Right cardiac atrium (tissue), 5 donors: ENCODE measurements at regions of chr19 and their contacts with region 1.

Region 1: GRCh38 chr19:2983351-2984195 is 6.2 kb downstream of the TLE6 start:
- DNase-seq: peak; percentile 84 to 91 (median 90)
- ATAC-seq: peak; percentile 67 to 74
- H3K4me3 ChIP-seq: peak overlapping the region; percentile 8
- H3K27ac ChIP-seq: peak overlapping the region; percentile 76
- H3K4me1 ChIP-seq: peaks cover 9% of the 10 kb centered on the region
- H3K27me3 ChIP-seq: no peaks in the 10 kb centered on the region

Region 2: GRCh38 chr19:2944775-2945574 is 38.6 kb before region 1 on chr19 and contains the start of gene ZNF77:
- intact Hi-C with region 1: no loop called
- DNase-seq: peak; percentile 99 to 100 (median 99)
- ATAC-seq: peak; percentile 96 to 99
- H3K4me3 ChIP-seq: peak within 1 kb of the TSS; percentile 77
- H3K27ac ChIP-seq: peak within 1 kb of the TSS; percentile 71
- H3K4me1 ChIP-seq: peaks cover 6% of the 10 kb centered on the region
- H3K27me3 ChIP-seq: no peaks in the 10 kb centered on the region
- total RNA-seq, gene ZNF77: 2.1 to 4.0 (median 2.9) TPM

Region 3: DNA sequence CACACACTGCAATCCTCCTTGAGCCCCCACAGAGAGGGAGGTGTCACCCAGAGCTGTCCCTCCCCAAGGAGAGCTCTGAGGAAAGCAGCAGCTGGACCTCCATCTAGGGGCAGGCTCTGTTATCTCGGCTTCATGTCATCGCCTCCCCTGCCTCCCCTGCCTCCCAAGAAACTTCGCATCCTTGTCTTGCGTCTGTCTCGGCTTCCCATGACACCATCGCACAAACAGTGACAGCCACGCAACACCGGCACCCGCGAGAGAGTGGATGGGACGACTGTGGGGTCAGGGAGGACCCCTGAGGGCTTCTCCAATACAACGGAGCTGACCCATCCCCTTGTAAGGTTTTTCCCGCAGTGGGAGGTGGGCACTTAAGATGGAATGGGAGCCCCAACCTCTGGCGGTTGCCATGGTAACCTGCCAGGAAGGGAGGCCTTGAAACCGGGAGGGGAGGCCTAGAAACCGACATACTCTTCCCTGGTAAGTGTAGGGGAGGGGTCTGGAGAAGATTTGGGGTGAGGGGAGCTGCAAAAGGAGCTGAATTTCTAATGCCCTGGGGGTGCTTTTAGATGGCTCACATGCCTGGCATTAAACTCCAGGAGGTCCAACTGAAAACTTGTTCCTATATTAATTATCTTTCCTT is 29.2 kb after region 1 on chr19:
- intact Hi-C with region 1: no loop called
- DNase-seq: no peak
- ATAC-seq: peak; percentile 52 to 55
- H3K4me3 ChIP-seq: no peak overlapping the region
- H3K27ac ChIP-seq: no peak overlapping the region
- H3K4me1 ChIP-seq: no peaks in the 10 kb centered on the region
- H3K27me3 ChIP-seq: no peaks in the 10 kb centered on the region

Region 4: DNA sequence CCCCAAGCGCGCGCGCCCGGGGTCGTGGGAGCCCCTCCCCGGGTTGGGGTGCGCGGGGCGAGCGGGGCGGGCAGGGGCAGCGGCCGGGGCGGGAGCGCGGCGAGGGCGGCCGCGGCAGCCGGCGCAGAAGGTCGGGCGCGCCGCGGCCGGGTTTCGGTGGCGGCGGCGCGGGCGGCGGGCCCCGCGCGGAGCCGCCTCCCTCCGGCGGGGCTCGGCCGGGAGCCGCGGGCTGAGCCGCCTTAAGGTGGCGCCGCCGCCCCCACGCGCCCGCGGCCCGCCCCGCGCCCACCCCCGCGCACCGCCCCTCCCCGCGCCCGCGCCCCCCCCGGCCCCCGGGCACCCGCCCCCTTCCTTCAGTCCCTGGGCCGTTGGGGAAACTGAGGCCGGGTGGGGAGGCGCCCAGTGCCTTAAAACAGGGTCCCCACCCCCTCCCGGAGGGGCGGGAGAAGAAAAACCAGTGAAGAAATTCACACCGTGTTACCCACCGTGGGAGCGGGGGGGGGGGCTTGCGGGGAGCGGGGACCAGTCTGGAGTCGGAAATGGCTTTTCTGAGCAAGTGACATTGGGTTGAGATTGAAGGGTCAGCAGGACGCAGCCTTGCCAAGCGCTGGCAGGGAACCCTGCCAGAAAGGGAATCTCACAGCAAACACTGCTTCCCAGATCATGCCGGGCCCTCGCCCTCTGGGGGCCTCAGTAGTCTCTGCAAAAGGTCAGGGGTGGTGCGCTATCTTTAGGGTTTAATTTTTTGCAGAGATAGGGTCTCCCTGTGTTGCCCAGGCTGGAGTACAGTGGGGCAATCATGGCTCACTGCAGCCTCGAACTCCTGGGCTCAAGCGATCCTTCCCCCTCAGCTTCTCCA is 45.7 kb after region 1 on chr19 and contains the start of gene TLE2:
- intact Hi-C with region 1: loop called (anchors 5 to 10 kb)
- DNase-seq: peak; percentile 56 to 77 (median 77)
- ATAC-seq: peak in 1 of 2 donors; percentile 39
- H3K4me3 ChIP-seq: peak within 1 kb of the TSS; percentile 96
- H3K27ac ChIP-seq: peak within 1 kb of the TSS; percentile 61
- H3K4me1 ChIP-seq: no peaks in the 10 kb centered on the region
- H3K27me3 ChIP-seq: no peaks in the 10 kb centered on the region
- total RNA-seq, gene TLE2: 78.4 to 102 (median 88.1) TPM

Region 5: DNA sequence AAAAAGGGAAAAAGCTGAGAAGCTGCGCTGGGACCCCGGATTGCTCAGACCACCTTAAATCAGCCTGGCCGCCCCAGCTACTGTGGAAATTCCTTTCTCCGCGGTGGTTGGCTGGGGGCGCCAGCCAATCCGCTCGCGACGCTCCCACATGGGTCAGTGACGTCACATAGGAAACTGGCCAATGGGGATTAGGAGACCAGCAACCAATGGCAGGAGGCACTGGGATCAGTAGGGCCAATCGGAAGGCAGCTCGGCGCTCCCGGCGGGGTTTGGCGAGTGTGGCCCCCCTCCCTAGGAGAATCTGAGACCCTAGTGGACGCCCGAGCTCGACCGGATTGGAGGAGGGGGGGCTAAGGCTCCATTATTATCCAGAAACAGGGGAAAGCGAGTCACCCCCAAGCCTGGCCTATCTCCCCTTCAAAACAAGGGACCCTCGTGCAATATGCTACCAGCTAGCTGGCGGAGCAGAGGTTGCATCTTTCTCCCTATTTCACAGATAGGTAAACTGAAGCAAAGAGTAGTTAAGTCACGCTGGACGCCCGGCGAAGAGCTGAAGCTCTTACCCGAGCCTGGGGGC is 52.1 kb after region 1 on chr19:
- intact Hi-C with region 1: loop called in 3 of 4 experiments (anchors 5 to 10 kb)
- DNase-seq: peak; percentile 98 to 99 (median 99)
- ATAC-seq: peak; percentile 96
- H3K4me3 ChIP-seq: peak overlapping the region; percentile 72
- H3K27ac ChIP-seq: peak overlapping the region; percentile 88
- H3K4me1 ChIP-seq: no peaks in the 10 kb centered on the region
- H3K27me3 ChIP-seq: no peaks in the 10 kb centered on the region